ENCODE measurements at regions of chr1 and their contacts with region 1.

Region 1: GRCh38 chr1:112304612-112305011 is 91.4 kb upstream of the CTTNBP2NL start:
- DNase-seq: no peak
- H3K4me3 ChIP-seq: no peak overlapping the region
- H3K27ac ChIP-seq: peak overlapping the region in 1 of 4 donors; percentile 36
- H3K4me1 ChIP-seq: peaks cover 0 to 4% (median 0%) of the 10 kb centered on the region in 3 donors
- H3K27me3 ChIP-seq: no peaks in the 10 kb centered on the region
- CTCF ChIP-seq: no peak
- POLR2A ChIP-seq: no peak

Region 2: DNA sequence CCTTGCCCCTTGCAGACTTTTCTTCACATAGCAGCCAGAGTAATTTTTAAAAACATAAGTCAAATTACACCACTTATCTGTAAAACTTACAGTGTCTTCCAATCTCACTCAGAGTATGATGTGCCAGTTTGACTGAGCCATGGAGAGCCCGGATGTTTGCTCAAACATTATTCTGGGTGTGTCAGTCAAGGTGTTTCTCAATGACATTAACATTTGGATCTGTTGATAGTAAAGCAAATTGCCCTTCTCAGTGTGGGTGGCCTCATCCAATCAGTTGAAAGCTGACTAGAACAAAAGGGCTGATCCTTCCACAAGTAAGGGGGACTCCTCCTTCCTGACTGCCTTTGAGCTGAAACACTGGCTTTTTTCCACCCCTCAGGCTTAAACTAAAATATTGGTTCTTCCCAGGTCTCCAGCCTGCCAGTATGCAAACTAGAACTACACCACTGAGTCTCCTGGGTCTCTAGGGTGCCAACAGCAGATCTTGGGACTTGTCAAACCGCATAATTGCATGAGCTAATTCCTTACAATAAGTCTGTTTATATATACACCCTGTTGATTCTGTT is 66.5 kb before region 1 on chr1:
- intact Hi-C with region 1: no loop called
- DNase-seq: no peak
- H3K4me3 ChIP-seq: no peak overlapping the region
- H3K27ac ChIP-seq: no peak overlapping the region
- H3K4me1 ChIP-seq: no peaks in the 10 kb centered on the region
- H3K27me3 ChIP-seq: peaks cover 0 to 9% (median 0%) of the 10 kb centered on the region in 4 donors
- CTCF ChIP-seq: no peak
- POLR2A ChIP-seq: no peak

Region 3: DNA sequence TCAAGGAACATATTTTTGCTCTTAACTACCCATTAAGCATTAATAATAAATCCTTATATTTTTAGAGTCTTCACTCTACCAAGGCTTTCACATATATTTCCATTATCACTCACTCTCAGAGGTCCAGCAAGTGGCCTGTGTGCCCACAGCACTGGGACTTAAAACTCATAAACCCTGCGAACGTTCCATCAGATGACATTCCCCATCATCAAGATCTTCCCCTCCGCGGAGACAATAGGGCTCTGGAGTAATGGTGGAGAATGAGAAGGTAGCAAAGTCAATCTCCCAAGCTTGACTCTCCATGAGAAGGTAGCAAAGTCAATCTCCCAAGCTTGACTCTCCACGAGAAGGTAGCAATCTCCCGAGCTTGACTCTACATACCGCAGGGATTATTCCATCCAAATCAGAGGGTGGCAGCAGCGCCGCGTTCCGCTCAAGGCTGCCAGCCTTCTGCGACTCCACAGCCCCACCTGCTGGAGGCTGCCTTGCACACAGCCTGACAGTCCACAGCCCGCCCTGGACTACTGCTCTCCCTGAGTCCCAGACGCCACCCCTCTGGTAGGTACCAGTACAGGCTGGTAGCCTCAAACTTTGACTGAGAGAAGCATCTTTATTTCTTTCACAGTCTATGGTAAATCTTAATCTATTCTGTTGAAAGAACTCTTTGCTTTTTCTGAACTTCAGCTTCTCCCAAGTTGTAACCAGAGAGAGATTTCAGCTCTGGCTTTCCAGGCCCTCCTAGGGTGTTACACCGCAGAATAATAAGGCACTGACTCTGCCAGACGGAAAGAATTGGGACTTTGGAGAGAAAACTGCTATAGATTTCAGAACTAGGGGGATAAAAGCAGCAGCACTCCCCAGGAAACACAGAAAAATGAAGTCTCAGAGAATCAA is 65.0 kb after region 1 on chr1:
- intact Hi-C with region 1: loop called (anchors 5 kb)
- DNase-seq: peak; percentile 39
- H3K4me3 ChIP-seq: no peak overlapping the region
- H3K27ac ChIP-seq: no peak overlapping the region
- H3K4me1 ChIP-seq: peaks cover 0 to 5% (median 0%) of the 10 kb centered on the region in 3 donors
- H3K27me3 ChIP-seq: peaks cover 0 to 30% (median 0%) of the 10 kb centered on the region in 4 donors
- CTCF ChIP-seq: peak; percentile 93 to 97 (median 95)
- POLR2A ChIP-seq: no peak